GM18951 (cell line): ENCODE measurements at regions of chr7 and their contacts with region 1.

Region 1: DNA sequence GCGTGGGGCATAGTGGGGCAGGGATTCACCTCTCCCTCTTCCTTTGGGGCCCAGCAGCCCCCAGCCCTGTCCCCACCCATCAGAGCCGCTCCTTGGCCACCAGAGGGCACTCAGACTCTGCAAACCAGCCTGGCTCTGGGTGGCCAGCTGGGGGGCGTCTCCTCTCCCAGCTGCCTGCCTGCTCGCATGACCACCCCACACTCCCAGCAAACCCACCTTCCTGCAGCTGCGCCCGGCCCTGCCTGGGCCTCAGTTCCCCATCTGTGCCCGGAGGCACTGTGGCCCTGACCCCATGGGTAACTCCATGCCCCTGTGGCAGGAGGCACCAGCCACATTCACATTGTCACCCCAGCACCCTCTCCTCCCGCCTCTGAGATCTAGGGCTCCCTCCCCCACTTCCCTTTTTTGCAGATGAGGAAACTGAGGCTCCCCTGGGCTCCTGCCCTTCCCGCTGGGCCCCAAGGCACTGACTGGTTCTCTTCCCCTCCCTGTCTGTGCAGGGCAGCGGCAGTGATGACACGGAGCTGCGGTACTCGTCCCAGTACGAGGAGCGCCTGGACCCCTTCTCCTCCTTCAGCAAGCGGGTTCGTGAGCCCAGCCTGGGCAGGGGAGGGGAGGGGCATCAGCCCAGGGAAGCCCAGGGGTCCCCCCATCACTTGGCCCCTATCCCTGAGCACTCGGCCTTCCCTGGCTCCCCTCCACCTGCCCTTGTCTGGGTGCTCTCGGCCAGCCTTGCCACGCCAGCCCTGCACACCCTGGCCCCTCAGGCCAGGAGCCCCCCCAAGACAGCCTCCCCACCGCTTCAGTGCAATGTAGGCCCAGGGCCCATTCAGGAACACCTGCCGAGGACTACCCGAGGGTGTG is 6.9 kb upstream of the SH2B2 start:
- POLR2A ChIP-seq: no peak

Region 2: DNA sequence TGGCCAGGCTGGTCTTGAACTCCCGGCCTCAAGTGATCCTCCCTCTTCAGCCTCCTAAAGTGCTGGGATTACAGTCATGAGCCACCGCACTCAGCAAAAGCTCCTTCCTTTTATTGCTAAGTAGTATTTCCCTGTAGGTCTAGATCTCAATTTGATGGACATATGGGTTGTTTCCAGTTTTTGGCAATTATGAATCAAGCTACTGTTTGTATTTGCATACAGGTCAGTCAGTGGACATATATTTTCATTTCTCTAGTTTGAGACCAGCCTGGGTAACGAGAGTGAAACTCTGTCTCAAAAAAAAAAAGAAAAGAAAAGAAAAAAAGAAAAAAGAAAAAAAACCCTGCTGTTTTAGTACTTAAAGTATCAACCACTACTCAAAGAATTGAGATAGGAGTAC is 110.0 kb after region 1 on chr7:
- in situ Hi-C with region 1: loop called (anchors 5 kb)
- POLR2A ChIP-seq: no peak

Region 3: GRCh38 chr7:102464577-102465280 is 185.0 kb after region 1 on chr7 and contains the starts of genes ALKBH4 and LRWD1:
- in situ Hi-C with region 1: loop called (anchors 10 kb)
- POLR2A ChIP-seq: peak; percentile 84